ENCODE measurements at regions of chr11 and their contacts with region 1.

Region 1: GRCh38 chr11:61639816-61640443 is 40.3 kb upstream of the DAGLA start:
- DNase-seq: no peak
- ATAC-seq: no peak
- H3K4me3 ChIP-seq: no peak overlapping the region
- H3K4me3 Mint-ChIP-seq: no peak overlapping the region
- H3K27ac ChIP-seq: no peak overlapping the region
- H3K27ac Mint-ChIP-seq: no peak overlapping the region
- H3K4me1 ChIP-seq: no peaks in the 10 kb centered on the region
- H3K4me1 Mint-ChIP-seq: no peaks in the 10 kb centered on the region
- H3K27me3 ChIP-seq: no peaks in the 10 kb centered on the region
- H3K27me3 Mint-ChIP-seq: peaks cover 3% of the 10 kb centered on the region
- CTCF ChIP-seq: no peak

Region 2: DNA sequence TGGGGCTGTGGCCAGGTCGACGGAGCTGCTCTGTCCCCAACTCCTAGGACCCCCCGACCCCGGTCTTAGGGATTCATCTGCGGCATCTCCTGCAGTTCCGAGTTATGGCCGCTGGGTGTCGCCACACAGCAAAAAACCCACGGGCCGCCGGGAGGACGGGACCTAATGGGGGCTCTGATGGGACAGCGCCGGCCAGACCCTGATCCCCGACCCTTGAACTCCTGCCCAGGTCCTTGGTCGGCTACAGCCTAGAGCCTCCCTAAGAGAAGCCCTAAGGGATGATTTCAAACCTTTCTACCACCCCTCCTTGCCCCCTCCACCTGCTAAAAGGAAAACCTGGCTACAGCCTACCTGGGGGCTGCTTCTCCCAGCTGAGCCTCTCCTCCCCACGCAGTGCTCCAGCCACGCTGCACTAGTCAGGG is 162.2 kb before region 1 on chr11:
- CTCF ChIA-PET with region 1: interaction called, 30 read pairs
- POLR2A ChIA-PET with region 1: no interaction called
- intact Hi-C with region 1: loop called in 1 of 2 experiments (anchors 1 kb)
- DNase-seq: peak; percentile 21 to 71 (median 59)
- ATAC-seq: peak; percentile 49
- H3K4me3 ChIP-seq: no peak overlapping the region
- H3K4me3 Mint-ChIP-seq: no peak overlapping the region
- H3K27ac ChIP-seq: no peak overlapping the region
- H3K27ac Mint-ChIP-seq: no peak overlapping the region
- H3K4me1 ChIP-seq: peaks cover 8% of the 10 kb centered on the region
- H3K4me1 Mint-ChIP-seq: peaks cover 8% of the 10 kb centered on the region
- H3K27me3 ChIP-seq: peaks cover 0 to 2% of the 10 kb centered on the region in 2 experiments
- H3K27me3 Mint-ChIP-seq: peaks cover 4% of the 10 kb centered on the region
- CTCF ChIP-seq: peak; percentile 78

Region 3: DNA sequence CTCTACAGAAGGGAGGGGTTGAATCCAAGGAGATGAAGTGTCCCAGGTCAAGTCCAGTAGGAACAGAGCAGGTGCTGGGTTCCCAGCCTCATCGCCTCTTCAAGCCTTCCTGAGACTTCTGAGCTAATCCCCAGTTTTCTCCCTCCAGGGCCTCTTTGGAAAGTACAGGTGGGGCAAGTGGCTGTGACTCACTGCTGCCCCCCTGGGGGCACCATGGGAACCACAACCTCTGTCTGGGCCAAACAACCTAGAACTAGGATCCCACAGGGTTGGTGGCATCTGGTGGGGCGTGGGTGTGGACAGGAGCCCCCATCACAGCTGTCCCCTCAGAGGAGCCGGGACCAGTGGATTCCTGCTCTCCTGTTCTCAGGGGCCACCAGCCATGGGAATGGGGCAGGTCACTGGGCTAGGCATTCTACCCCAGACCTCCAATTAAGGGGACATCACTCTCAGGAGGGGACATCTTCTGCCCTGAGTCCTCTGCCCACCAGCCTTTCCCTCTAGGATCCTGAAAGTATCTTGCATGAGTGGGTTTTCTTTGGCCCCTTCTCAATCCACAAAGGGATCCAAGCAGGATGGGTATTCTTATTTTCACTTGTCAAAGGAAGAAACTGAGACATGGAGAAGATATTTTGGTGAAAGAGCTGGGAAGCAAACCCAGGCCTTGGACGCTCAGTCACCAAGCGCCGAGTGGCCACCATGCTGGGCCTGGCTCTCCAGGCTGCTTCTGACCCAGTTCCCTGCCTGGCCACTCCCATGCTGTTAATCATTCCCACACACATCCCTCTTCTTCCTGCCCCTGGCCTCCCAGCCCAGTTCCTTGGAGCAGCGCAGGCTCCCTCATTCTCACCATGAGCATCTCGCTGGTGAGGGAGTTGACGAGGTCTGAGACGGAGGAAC is 107.5 kb before region 1 on chr11:
- CTCF ChIA-PET with region 1: interaction called, 3 read pairs
- POLR2A ChIA-PET with region 1: no interaction called
- intact Hi-C with region 1: loop called in 1 of 2 experiments (anchors 5 kb)
- DNase-seq: peak in 7 of 9 experiments; percentile 26 to 58 (median 38)
- ATAC-seq: peak; percentile 55
- H3K4me3 ChIP-seq: no peak overlapping the region
- H3K4me3 Mint-ChIP-seq: no peak overlapping the region
- H3K27ac ChIP-seq: no peak overlapping the region
- H3K27ac Mint-ChIP-seq: no peak overlapping the region
- H3K4me1 ChIP-seq: no peaks in the 10 kb centered on the region
- H3K4me1 Mint-ChIP-seq: no peaks in the 10 kb centered on the region
- H3K27me3 ChIP-seq: no peaks in the 10 kb centered on the region
- H3K27me3 Mint-ChIP-seq: peaks cover 28% of the 10 kb centered on the region
- CTCF ChIP-seq: peak; percentile 68

Region 4: GRCh38 chr11:61627567-61628445 is 12.1 kb before region 1 on chr11:
- CTCF ChIA-PET with region 1: interaction called, 13 read pairs
- POLR2A ChIA-PET with region 1: no interaction called
- intact Hi-C with region 1: no loop called
- DNase-seq: peak in 5 of 9 experiments; percentile 6 to 35 (median 20)
- ATAC-seq: no peak
- H3K4me3 ChIP-seq: no peak overlapping the region
- H3K4me3 Mint-ChIP-seq: no peak overlapping the region
- H3K27ac ChIP-seq: no peak overlapping the region
- H3K27ac Mint-ChIP-seq: no peak overlapping the region
- H3K4me1 ChIP-seq: no peaks in the 10 kb centered on the region
- H3K4me1 Mint-ChIP-seq: no peaks in the 10 kb centered on the region
- H3K27me3 ChIP-seq: no peaks in the 10 kb centered on the region
- H3K27me3 Mint-ChIP-seq: peaks cover 17% of the 10 kb centered on the region
- CTCF ChIP-seq: peak; percentile 28

Region 5: GRCh38 chr11:62123669-62124185 is 483.8 kb after region 1 on chr11 and contains the start of gene INCENP:
- CTCF ChIA-PET with region 1: no interaction called
- POLR2A ChIA-PET with region 1: no interaction called
- intact Hi-C with region 1: no loop called
- DNase-seq: peak; percentile 90 to 98 (median 94)
- ATAC-seq: peak; percentile 98
- H3K4me3 ChIP-seq: peak within 1 kb of the TSS; percentile 78 to 97
- H3K4me3 Mint-ChIP-seq: peak within 1 kb of the TSS; percentile 92
- H3K27ac ChIP-seq: peak within 1 kb of the TSS; percentile 50 to 51
- H3K27ac Mint-ChIP-seq: peak within 1 kb of the TSS; percentile 84
- H3K4me1 ChIP-seq: peaks cover 18% of the 10 kb centered on the region
- H3K4me1 Mint-ChIP-seq: peaks cover 30% of the 10 kb centered on the region
- H3K27me3 ChIP-seq: no peaks in the 10 kb centered on the region
- H3K27me3 Mint-ChIP-seq: no peaks in the 10 kb centered on the region
- CTCF ChIP-seq: no peak
- total RNA-seq, gene INCENP: 11.6 to 16.1 TPM